A549 (cell line): ENCODE measurements at regions of chr10 and their contacts with region 1.

Region 1: DNA sequence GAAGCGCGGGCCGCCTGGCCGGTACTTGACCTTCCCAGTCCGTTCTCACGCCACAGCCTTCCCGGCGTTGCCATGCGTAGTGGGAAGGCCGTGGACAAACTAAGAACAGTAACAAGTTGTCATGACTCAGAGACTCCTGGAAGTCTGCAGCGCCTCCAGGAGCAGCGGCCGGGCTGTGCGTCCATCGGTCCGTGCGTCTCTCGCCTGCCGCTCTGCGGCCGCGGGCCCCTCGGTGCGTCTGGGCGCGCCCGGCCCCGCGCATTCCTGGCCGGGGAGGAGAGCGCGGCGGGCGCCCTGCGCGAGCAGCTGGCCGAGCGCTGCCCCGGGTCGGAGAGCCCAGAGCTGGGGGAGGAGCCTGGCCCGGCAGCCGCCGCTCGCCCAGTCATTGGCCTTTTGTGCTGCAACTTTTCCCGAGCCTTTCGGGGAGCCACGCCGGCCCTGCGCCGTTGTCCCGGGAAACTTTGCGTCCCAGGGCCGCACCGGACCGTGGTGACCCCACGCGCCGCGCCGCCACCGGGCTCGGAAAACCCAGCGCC is 123.7 kb downstream of the TACC2 start:
- DNase-seq: peak; percentile 93 to 96
- ATAC-seq: peak; percentile 89
- H3K4me3 ChIP-seq: peak overlapping the region; percentile 95
- H3K27ac ChIP-seq: peak overlapping the region; percentile 98
- H3K4me1 ChIP-seq: peaks cover 43% of the 10 kb centered on the region
- CTCF ChIP-seq: peak; percentile 62
- EP300 ChIP-seq: no peak; a peak in 1 of 5 replicates
- POLR2A ChIP-seq: peak; percentile 70
- RAD21 ChIP-seq: peak; percentile 69 to 82

Region 2: DNA sequence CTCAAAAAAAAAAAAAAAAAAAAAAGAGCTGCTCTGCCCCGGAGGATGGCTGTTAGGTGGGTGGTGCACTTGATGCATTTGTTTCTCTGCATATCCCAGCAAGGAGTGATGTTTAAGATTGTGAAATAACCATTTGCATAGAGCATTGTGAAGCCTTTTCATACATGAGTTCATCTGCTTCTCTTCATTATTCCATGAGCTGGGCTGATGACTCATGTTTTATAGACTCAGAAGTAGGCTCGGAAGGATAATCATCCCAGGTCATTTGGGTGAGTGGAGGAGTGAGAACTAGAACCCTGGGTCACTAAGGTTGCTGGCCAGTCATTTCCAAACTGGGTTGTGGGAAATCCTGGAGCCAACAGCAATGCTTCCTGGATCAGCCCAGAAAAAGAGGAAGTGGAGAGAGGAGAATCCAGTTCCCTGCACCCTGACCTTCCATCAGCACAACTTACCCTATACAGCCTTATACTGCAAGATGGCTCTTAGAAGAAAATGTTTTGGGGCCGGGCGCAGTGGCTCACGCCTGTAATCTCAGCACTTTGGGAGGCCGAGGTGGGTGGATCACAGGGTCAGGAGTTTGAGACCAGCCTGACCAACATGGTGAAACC is 78.4 kb before region 1 on chr10:
- CTCF ChIA-PET with region 1: interaction called, 20 read pairs
- POLR2A ChIA-PET with region 1: interaction called, 6 read pairs
- DNase-seq: peak; percentile 57 to 83
- ATAC-seq: peak; percentile 71 to 77
- H3K4me3 ChIP-seq: no peak overlapping the region
- H3K27ac ChIP-seq: peak overlapping the region; percentile 49 to 79
- H3K4me1 ChIP-seq: peaks cover 49% of the 10 kb centered on the region
- CTCF ChIP-seq: no peak
- EP300 ChIP-seq: no peak
- POLR2A ChIP-seq: no peak
- RAD21 ChIP-seq: no peak

Region 3: DNA sequence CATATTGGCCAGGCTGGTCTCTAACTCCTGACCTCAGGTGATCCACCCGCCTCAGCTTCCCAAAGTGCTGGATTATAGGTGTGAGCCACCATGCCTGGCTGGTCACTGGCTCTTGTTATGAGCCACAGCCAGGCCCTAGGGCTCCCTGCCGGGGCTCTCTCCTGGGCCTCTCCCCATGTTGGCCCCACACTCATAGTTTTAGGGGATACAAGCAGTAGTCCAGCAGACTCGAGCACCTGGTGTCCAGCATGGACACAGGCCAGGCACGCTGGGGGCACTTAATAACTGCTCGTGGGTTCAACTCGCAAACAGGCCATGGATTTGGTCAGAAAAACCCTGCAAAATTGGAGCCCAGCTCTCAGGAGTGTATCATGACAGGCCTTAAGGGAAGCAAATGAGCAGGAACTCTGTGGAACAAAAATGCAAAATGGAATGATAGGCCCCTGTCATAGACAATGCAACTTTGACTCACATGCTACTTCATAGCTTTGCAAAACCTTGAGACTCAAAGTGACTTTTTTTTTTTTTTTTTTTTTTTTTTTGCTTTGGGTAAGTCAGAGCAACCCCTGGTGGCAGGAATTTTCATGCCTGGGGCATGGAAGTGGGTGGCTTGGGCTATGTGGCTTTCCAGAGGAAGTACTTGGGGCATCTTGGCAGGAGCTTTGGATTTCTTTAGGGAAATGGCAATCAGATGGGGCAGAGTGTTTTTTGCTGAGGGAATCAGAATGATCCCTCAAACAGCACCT is 61.3 kb before region 1 on chr10:
- CTCF ChIA-PET with region 1: interaction called, 35 read pairs
- POLR2A ChIA-PET with region 1: interaction called, 8 read pairs
- DNase-seq: peak; percentile 64 to 87
- ATAC-seq: peak; percentile 52 to 71; a peak in 5 of 6 replicates
- H3K4me3 ChIP-seq: no peak overlapping the region
- H3K27ac ChIP-seq: peak overlapping the region; percentile 67 to 82
- H3K4me1 ChIP-seq: peaks cover 25% of the 10 kb centered on the region
- CTCF ChIP-seq: peak; percentile 79
- EP300 ChIP-seq: no peak
- POLR2A ChIP-seq: no peak
- RAD21 ChIP-seq: peak; percentile 62 to 64

Region 4: GRCh38 chr10:122072491-122072890 is 40.2 kb before region 1 on chr10:
- CTCF ChIA-PET with region 1: interaction called, 13 read pairs
- POLR2A ChIA-PET with region 1: interaction called, 6 read pairs
- DNase-seq: no peak
- ATAC-seq: no peak
- H3K4me3 ChIP-seq: no peak overlapping the region
- H3K27ac ChIP-seq: peak overlapping the region; percentile 93 to 94; a peak in 5 of 6 replicates
- H3K4me1 ChIP-seq: peaks cover 46% of the 10 kb centered on the region
- CTCF ChIP-seq: no peak
- EP300 ChIP-seq: no peak
- POLR2A ChIP-seq: no peak
- RAD21 ChIP-seq: no peak

Region 5: GRCh38 chr10:122098924-122099323 is 13.8 kb before region 1 on chr10:
- CTCF ChIA-PET with region 1: interaction called, 74 read pairs
- POLR2A ChIA-PET with region 1: interaction called, 35 read pairs
- DNase-seq: no peak
- ATAC-seq: no peak
- H3K4me3 ChIP-seq: no peak overlapping the region
- H3K27ac ChIP-seq: peak overlapping the region; percentile 93 to 95
- H3K4me1 ChIP-seq: peaks cover 35% of the 10 kb centered on the region
- CTCF ChIP-seq: no peak
- EP300 ChIP-seq: no peak
- POLR2A ChIP-seq: no peak
- RAD21 ChIP-seq: no peak

Region 6: DNA sequence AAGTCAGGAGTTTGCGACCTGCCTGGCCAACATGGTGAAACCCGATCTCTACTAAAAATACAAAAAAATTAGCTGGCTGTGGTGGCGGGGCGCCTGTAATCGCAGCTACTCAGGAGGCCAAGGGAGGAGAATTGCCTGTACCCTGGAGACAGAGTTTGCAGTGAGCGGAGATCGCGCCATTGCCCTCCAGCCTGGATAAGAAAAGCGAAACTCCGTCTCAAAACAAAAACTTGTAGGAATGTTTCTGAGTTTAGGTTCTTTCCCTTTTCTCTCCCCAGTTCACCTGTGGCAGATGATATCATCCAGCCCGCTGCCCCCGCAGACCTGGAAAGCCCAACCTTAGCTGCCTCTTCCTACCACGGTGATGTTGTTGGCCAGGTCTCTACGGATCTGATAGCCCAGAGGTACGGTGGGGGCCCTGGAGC is 19.6 kb after region 1 on chr10:
- CTCF ChIA-PET with region 1: interaction called, 18 read pairs
- POLR2A ChIA-PET with region 1: interaction called, 8 read pairs
- DNase-seq: no peak
- ATAC-seq: no peak; a peak in 1 of 6 replicates
- H3K4me3 ChIP-seq: no peak overlapping the region
- H3K27ac ChIP-seq: no peak overlapping the region; a peak in 1 of 6 replicates
- H3K4me1 ChIP-seq: peaks cover 45% of the 10 kb centered on the region
- CTCF ChIP-seq: no peak
- EP300 ChIP-seq: no peak
- POLR2A ChIP-seq: no peak
- RAD21 ChIP-seq: no peak